ENCODE measurements at regions of chr3 and their contacts with region 1.

Region 1: GRCh38 chr3:112676659-112677234 is 35.8 kb upstream of the CCDC80 start:
- DNase-seq: peak; percentile 90
- H3K4me3 ChIP-seq: no peak overlapping the region
- H3K27ac ChIP-seq: peak overlapping the region; percentile 15
- H3K4me1 ChIP-seq: peaks cover 12% of the 10 kb centered on the region
- H3K27me3 ChIP-seq: no peaks in the 10 kb centered on the region
- CTCF ChIP-seq: no peak
- POLR2A ChIP-seq: no peak

Region 2: GRCh38 chr3:112437146-112438022 is 239.4 kb before region 1 on chr3:
- CTCF ChIA-PET with region 1: no interaction called
- POLR2A ChIA-PET with region 1: no interaction called
- dilution Hi-C with region 1: no loop called
- intact Hi-C with region 1: no loop called
- DNase-seq: peak; percentile 33
- H3K4me3 ChIP-seq: no peak overlapping the region
- H3K27ac ChIP-seq: no peak overlapping the region
- H3K4me1 ChIP-seq: no peaks in the 10 kb centered on the region
- H3K27me3 ChIP-seq: no peaks in the 10 kb centered on the region
- CTCF ChIP-seq: peak; percentile 36 to 41
- POLR2A ChIP-seq: no peak

Region 3: DNA sequence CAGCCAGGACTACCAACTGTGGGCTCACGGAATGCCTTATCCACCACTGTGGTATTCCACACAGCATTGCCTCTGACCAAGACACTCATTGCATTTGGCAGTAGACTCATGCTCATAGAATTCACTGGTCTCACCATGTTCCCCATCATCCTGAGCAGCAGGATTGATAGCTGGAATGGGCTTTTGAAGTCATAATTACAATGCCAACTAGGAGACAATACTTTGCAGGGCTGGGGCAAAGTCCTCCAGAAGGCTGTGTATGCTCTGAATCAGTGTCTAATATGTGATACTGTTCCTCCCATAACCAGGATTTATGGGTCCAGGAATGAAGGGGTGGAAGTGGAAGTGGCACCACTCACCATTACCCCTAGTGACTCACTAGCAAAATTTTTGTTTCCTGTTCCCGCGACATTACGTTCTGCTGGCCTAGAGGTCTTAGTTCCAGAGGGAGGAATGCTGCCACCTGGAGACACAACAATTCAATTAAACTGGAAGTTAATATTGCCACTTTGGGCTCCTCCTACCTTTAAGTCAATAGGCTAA is 22.8 kb after region 1 on chr3:
- CTCF ChIA-PET with region 1: interaction called, 4 read pairs
- POLR2A ChIA-PET with region 1: no interaction called
- dilution Hi-C with region 1: no loop called
- intact Hi-C with region 1: loop called (anchors 2 kb)
- DNase-seq: peak; percentile 50
- H3K4me3 ChIP-seq: no peak overlapping the region
- H3K27ac ChIP-seq: no peak overlapping the region
- H3K4me1 ChIP-seq: peaks cover 4% of the 10 kb centered on the region
- H3K27me3 ChIP-seq: no peaks in the 10 kb centered on the region
- CTCF ChIP-seq: peak; percentile 14 to 16
- POLR2A ChIP-seq: no peak

Region 4: DNA sequence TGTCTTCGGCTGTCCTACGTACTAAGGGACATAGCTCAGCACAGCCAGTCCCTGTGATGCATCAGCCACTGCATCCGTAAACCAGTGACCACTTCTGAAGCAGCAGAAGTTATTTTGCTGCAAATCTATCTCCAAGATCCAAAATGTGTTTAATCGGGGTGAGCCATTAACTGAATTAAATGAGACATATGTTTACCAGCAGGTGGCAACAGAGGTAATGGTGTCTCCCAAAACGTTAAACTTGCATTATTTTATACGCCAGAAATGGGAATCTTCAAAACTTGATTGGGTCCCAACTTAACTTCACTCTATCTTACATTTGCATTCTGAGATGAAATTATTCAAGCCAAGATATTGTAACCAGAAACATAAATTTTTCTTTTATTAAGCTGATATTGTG is 459.3 kb after region 1 on chr3:
- CTCF ChIA-PET with region 1: no interaction called
- POLR2A ChIA-PET with region 1: no interaction called
- dilution Hi-C with region 1: no loop called
- intact Hi-C with region 1: no loop called
- DNase-seq: peak; percentile 20
- H3K4me3 ChIP-seq: no peak overlapping the region
- H3K27ac ChIP-seq: no peak overlapping the region
- H3K4me1 ChIP-seq: no peaks in the 10 kb centered on the region
- H3K27me3 ChIP-seq: no peaks in the 10 kb centered on the region
- CTCF ChIP-seq: peak; percentile 27 to 30
- POLR2A ChIP-seq: no peak